ENCODE measurements at regions of chr1 and their contacts with region 1.

Region 1: DNA sequence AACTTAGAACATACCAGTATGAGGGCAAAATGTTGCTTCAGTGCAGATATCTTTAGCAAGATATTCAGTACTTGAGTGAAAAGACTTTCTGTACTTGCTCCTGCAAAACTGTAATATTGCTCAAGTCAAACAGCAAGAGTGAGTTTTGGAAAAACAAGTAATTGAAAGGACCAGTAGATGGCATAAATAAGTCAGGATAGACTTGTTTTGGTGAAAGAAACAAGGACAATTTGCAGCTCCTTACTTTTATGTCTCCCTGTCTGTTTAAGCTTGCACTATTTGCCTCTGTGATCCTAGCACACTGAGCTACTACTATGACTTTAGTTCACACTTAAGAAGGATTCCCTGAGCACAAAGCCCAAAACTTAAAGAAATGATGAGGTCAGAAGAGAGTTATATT is 39.1 kb downstream of the IFI44 start:
- DNase-seq: peak; percentile 44
- H3K4me3 Mint-ChIP-seq: no peak overlapping the region
- H3K27ac Mint-ChIP-seq: no peak overlapping the region
- H3K4me1 Mint-ChIP-seq: peaks cover 22% of the 10 kb centered on the region
- H3K27me3 Mint-ChIP-seq: no peaks in the 10 kb centered on the region
- CTCF ChIP-seq: peak; percentile 43

Region 2: GRCh38 chr1:78627321-78627720 is 61.4 kb before region 1 on chr1:
- CTCF ChIA-PET with region 1: no interaction called
- POLR2A ChIA-PET with region 1: no interaction called
- intact Hi-C with region 1: no loop called
- DNase-seq: no peak
- H3K4me3 Mint-ChIP-seq: no peak overlapping the region
- H3K27ac Mint-ChIP-seq: no peak overlapping the region
- H3K4me1 Mint-ChIP-seq: peaks cover 12% of the 10 kb centered on the region
- H3K27me3 Mint-ChIP-seq: no peaks in the 10 kb centered on the region
- CTCF ChIP-seq: no peak

Region 3: GRCh38 chr1:78831731-78832360 is 143.1 kb after region 1 on chr1:
- CTCF ChIA-PET with region 1: interaction called, 3 read pairs
- POLR2A ChIA-PET with region 1: no interaction called
- intact Hi-C with region 1: loop called (anchors 1 kb)
- DNase-seq: peak; percentile 78
- H3K4me3 Mint-ChIP-seq: no peak overlapping the region
- H3K27ac Mint-ChIP-seq: peak overlapping the region; percentile 78
- H3K4me1 Mint-ChIP-seq: peaks cover 42% of the 10 kb centered on the region
- H3K27me3 Mint-ChIP-seq: no peaks in the 10 kb centered on the region
- CTCF ChIP-seq: no peak

Region 4: DNA sequence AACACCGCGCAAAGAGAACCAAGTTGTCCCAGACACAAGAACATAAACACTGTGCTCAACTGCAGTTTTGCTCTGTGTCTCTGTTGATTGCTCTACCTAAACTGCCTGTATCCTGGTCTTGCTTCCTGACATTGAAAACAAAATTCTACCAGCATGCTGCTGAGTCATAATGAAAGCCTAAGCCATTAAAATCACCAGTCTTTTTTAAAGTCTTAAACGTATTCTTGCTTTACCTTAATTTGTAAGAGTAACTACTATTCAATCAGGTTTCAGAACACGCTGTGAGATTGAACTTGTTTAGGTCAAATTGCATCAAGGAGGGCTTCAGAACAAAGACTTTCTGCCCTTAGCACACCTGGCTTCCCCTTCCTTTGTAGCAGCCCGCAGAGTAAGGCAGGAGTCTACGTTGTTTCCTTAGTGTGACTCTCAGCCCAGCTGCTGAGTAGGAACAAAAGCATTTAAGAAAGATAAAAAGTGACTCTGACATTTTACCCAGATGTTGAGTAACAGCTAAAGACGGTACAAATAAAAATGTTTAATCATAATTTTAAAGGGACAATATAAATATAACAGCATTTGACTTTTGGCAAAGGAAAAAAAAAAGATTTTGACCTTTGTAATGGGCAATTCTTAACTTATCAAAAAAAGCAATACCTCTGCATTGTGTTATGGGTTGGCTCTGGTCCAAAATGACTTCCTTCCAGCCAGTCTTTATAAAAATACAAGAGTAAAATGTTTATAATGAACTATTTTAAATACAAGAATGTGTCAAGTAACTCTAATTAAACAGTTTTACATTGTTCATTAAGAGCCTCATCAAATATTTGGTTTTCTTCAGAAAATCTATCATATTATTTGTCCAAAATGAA is 504.7 kb after region 1 on chr1:
- CTCF ChIA-PET with region 1: no interaction called
- POLR2A ChIA-PET with region 1: no interaction called
- intact Hi-C with region 1: loop called (anchors 1 kb)
- DNase-seq: peak; percentile 73
- H3K4me3 Mint-ChIP-seq: peak overlapping the region; percentile 52
- H3K27ac Mint-ChIP-seq: peak overlapping the region; percentile 92
- H3K4me1 Mint-ChIP-seq: peaks cover 10% of the 10 kb centered on the region
- H3K27me3 Mint-ChIP-seq: no peaks in the 10 kb centered on the region
- CTCF ChIP-seq: no peak

Measured in MCF 10A (cell line).